ENCODE measurements at regions of chr17 and their contacts with region 1.

Region 1: DNA sequence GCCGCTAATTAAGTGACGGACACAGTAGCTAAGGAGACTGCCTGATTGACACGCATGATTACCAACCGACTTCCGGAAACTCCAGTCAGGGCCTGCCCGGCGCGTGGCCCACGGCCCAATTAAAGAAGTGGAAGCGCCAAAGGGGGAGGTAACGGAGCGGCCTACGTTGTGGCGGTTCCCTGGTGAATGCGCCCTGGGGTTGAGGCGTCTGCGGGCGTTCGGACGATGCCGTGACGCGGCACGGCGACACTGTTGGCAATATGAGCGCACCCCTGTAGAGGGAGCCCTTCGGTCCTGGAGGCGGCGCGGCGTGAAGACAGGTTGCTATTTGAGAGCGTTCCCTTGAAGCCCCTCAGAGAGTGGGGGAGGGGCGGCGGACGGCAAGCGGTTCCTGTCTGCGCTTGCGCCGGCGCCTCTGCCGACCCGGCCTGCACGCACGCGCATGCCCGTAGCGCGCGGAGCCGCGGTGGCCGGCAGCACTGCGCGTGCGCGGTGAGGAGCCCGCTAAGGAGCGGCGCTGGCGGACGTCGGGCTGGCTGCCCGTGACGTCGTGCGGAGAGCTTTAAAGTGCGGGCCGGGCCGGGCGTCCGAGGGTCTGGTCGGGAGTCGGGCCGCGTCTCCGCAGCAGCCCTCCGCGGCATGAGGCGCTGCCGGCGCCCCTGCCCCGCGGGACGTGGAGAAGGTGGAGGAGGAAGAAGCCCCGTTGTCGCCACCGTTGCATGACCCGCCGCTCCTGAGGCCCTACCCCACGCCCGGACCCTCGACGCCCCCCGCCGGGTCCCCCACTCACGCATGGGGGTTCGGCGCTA is at the start of gene ALKBH5:
- DNase-seq: peak; percentile 95
- H3K4me3 Mint-ChIP-seq: peak within 1 kb of the TSS; percentile 98
- H3K27ac Mint-ChIP-seq: peak within 1 kb of the TSS; percentile 97
- H3K4me1 Mint-ChIP-seq: peaks cover 64% of the 10 kb centered on the region
- H3K27me3 Mint-ChIP-seq: no peaks in the 10 kb centered on the region
- total RNA-seq, gene ALKBH5: 127 and 128 TPM in 2 replicates

Region 2: DNA sequence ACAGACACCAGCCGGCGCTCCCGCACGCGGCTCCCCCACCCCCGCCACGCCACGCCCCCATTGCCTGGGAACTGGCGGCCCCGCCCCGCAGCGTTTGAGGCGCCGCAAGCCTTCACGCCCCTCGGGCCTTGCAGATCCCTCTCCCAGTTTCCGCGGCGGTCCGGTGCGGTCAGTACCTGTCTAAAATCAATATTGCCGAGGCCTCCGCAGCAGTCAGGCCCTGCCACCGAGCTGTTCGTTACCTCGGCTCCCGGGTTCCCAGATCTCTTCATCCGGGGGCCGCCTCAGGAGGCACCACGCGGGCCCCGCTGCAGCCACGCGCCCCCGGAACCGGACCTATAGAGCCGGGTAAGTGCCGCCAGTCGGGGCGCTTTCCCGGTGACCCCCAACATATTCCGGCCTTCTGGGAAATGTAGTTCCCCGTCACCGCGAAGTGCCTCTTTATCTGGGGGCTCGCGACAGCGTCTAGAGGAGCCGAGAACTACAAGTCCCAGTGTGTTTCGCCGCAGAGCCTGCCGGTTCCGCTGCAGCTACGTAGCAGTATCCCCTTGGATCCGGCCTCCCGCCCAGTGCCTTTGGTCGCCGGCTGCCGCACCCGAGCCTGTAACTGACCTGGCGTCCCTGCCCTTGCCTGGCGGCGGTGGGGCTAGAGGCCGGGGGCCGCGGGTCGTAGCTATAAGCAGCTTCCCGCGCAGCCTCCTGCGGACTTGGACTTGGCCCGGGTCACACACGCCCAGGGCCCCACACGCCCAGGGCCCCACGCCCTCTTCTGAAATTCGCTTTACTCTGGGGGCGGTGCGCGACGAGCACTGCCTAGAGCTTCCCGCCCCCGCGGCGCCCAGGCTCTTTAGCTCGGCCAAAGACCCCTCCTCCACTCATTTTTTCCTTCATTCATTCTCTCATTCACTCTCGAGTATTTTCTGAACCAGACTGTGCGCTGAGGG is 591.9 kb before region 1 on chr17 and contains the start of gene PEMT:
- intact Hi-C with region 1: loop called (anchors 1 kb)
- DNase-seq: peak; percentile 90
- H3K4me3 Mint-ChIP-seq: peak within 1 kb of the TSS; percentile 98
- H3K27ac Mint-ChIP-seq: peak within 1 kb of the TSS; percentile 94
- H3K4me1 Mint-ChIP-seq: peaks cover 18% of the 10 kb centered on the region
- H3K27me3 Mint-ChIP-seq: no peaks in the 10 kb centered on the region
- total RNA-seq, gene PEMT: 39.9 and 45.1 TPM in 2 replicates

Region 3: GRCh38 chr17:17823433-17824118 is 360.0 kb before region 1 on chr17:
- intact Hi-C with region 1: loop called (anchors 5 kb)
- DNase-seq: peak; percentile 82
- H3K4me3 Mint-ChIP-seq: peak overlapping the region; percentile 80
- H3K27ac Mint-ChIP-seq: peak overlapping the region; percentile 91
- H3K4me1 Mint-ChIP-seq: peaks cover 92% of the 10 kb centered on the region
- H3K27me3 Mint-ChIP-seq: no peaks in the 10 kb centered on the region

Region 4: GRCh38 chr17:18038861-18039534 is 144.5 kb before region 1 on chr17 and contains the starts of genes ATPAF2 and GID4:
- intact Hi-C with region 1: loop called (anchors 1 kb)
- DNase-seq: peak; percentile 100
- H3K4me3 Mint-ChIP-seq: peak within 1 kb of the TSS; percentile 100
- H3K27ac Mint-ChIP-seq: peak within 1 kb of the TSS; percentile 99
- H3K4me1 Mint-ChIP-seq: peaks cover 43% of the 10 kb centered on the region
- H3K27me3 Mint-ChIP-seq: no peaks in the 10 kb centered on the region
- total RNA-seq, gene ATPAF2: 34.9 and 37.8 TPM in 2 replicates
- total RNA-seq, gene GID4: 9.6 and 10.0 TPM in 2 replicates

Region 5: DNA sequence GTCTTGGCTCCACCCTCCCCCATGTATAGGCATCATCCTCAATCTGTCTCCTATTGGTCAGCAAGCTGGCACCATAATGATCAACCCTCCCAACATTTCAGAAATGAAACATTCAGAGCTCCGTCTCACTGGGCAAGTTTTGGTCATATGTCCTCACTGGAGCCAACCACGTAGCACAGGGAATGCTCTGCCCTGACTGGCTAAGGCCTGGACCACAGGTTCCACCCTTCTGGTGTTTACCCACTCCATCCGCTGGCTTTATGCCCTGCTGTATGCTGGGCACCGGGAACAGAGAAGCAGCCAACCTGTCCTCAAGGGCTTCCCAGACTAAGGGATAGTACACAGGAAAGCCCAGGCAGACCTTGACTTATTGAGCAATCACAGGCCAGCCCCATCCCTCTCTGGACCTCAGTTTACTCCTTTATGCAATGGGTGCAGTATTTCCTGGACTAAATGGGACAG is 54.5 kb before region 1 on chr17:
- intact Hi-C with region 1: no loop called
- DNase-seq: no peak
- H3K4me3 Mint-ChIP-seq: no peak overlapping the region
- H3K27ac Mint-ChIP-seq: no peak overlapping the region
- H3K4me1 Mint-ChIP-seq: no peaks in the 10 kb centered on the region
- H3K27me3 Mint-ChIP-seq: peaks cover 2% of the 10 kb centered on the region

Region 6: GRCh38 chr17:18141210-18141803 is 42.2 kb before region 1 on chr17:
- intact Hi-C with region 1: loop called (anchors 1 kb)
- DNase-seq: peak; percentile 11
- H3K4me3 Mint-ChIP-seq: no peak overlapping the region
- H3K27ac Mint-ChIP-seq: no peak overlapping the region
- H3K4me1 Mint-ChIP-seq: peaks cover 5% of the 10 kb centered on the region
- H3K27me3 Mint-ChIP-seq: peaks cover 4% of the 10 kb centered on the region

Region 7: DNA sequence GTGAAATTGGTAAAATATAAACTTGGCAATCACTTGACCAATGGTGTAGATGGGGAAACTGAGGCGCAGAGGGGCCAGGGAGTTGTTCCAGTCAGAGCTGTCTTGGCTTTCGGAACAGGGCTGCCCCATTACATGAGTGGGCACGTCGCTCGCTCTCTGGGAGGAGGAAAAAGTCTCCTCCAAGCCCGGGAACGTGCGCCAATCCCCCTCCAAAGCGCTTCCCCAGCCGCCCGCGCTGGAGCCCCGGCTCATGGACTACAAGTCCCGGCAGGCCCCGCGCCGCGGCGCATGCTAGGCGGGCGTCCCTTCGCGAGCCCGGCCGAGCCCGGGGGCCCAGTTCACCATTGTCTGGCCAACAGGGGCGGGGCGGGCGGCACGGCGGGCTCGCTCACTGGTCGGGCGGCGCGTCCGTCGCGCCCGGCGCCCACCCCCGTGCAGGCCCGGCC is 41.6 kb after region 1 on chr17:
- intact Hi-C with region 1: loop called (anchors 1 kb)
- DNase-seq: peak; percentile 95
- H3K4me3 Mint-ChIP-seq: peak overlapping the region; percentile 70
- H3K27ac Mint-ChIP-seq: peak overlapping the region; percentile 48
- H3K4me1 Mint-ChIP-seq: peaks cover 20% of the 10 kb centered on the region
- H3K27me3 Mint-ChIP-seq: peaks cover 2% of the 10 kb centered on the region

Region 8: DNA sequence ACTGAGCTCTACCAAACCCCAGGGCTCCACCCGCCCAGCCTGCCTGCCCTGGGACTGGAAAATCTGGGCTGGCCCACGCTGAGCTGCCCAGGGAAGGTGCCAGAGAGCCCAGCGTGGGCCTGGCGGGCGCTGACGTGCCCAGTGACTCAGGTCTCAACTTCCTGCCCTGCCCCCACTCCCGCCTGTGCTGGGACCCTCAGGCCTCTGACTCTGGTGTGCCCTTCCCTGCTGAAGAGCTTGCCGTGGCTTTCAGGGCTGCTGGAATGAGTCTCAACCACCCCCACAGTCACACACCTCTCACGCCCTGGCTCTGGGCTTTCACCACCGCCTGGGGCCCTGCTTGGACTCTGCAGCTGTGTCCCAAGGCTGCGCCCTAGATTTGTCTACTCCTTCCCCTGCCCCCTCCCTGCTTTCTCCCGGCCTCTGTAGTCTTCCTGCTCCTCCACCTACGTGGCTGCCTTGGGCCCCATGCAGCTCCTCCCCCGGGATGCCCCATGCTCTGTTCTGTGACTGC is 52.3 kb after region 1 on chr17:
- intact Hi-C with region 1: no loop called
- DNase-seq: no peak
- H3K4me3 Mint-ChIP-seq: no peak overlapping the region
- H3K27ac Mint-ChIP-seq: peak overlapping the region; percentile 1
- H3K4me1 Mint-ChIP-seq: no peaks in the 10 kb centered on the region
- H3K27me3 Mint-ChIP-seq: no peaks in the 10 kb centered on the region

Region 9: DNA sequence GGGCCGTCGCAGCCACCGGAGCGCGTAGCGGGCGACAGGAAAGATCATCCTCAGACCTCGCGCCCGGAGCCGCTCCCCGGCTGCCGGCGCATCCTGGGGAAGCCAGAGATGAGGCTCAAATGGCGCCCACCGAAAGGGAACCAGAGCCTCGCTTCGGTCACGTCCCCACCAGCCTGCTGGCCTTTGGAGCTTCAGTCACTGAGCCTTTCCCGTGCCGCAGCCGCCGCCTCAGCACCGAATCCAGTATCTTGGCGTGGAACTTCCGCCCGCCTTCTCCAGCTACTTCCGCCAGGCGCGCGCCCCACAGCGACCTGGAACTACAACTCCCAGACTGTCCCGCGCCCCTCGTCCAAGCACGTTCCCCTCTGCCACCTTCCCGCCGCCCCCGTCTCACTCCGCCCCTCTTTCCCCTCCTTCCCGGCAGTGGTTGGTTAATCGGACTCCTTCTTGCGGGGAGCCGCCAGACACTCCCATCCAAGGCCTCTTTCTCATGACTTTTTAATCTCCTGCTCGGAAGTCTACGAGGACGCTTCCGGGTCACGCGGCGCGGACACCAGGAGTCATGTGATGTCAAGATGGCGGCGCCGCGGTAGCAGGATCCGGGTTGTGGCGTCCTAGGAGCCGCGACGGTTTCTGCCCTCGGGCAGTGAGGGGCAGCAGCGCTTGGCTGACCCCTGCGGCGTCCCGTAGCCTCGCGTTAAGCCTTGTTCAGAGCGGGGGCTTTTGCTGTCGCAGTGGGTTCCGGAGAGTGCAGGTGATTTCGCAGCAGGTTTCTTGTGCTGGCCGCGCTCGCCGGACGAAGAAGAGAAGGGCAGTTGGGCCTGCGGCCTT is 131.4 kb after region 1 on chr17 and contains the starts of genes SMCR8 and TOP3A:
- intact Hi-C with region 1: loop called (anchors 2 kb)
- DNase-seq: peak; percentile 95
- H3K4me3 Mint-ChIP-seq: peak within 1 kb of the TSS; percentile 93
- H3K27ac Mint-ChIP-seq: peak within 1 kb of the TSS; percentile 100
- H3K4me1 Mint-ChIP-seq: peaks cover 75% of the 10 kb centered on the region
- H3K27me3 Mint-ChIP-seq: peaks cover 2% of the 10 kb centered on the region
- total RNA-seq, gene SMCR8: 18.7 and 19.2 TPM in 2 replicates
- total RNA-seq, gene TOP3A: 75.2 and 87.2 TPM in 2 replicates

Region 10: DNA sequence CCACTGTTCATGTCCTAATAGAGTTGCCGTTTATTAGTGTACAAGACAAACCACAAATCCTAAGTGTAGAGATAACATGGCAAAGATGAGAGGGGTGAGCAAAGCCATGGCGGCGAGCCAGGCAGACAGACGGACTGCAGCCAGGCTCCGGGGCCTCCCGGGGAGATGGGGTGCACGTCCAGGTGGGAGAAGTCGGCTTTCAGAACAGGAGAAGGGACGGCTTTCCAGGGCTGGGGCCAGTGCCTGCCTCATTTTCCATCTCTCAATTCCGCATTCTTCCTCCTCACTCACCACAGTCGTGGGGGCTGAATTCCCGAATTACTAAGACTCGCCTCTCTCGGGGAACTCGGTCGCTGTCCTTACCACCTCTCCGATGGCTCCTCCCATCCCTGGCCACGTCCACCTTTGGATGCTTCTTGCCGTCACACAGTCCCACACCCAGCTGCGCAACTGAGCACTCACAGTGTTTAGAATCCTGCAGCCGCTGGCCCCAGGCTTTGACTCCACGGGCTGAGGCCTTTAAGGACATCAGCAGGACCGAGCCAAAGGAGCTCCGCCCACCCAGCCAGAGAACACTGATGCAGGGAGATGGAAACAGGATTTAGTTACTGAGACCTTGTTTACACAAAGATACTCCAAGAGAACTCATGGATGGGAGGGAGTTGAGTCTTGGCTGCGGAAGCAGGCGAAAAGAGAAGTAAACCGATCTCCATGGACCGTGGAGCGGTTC is 1287.2 kb after region 1 on chr17:
- intact Hi-C with region 1: no loop called
- DNase-seq: no peak
- H3K4me3 Mint-ChIP-seq: no peak overlapping the region
- H3K27ac Mint-ChIP-seq: no peak overlapping the region
- H3K4me1 Mint-ChIP-seq: no peaks in the 10 kb centered on the region
- H3K27me3 Mint-ChIP-seq: peaks cover 1% of the 10 kb centered on the region

Measured in activated T-helper 1 cell treated with anti-CD3 and anti-CD28 coated beads, Interleukin-12 subunit alpha, Interleukin-12 subunit beta, Interleukin-2, Interleukin-4 antibody, amounts not matched to agents 30 ng/mL and 10 ng/mL and 1 ng/mL, durations not matched to agents 14 hours and 24 hours and 36 hours (primary cell).